Activated B cell treated with CpG ODN at 0.5 μM for 24 hours (primary cell): ENCODE measurements at regions of chr21 and their contacts with region 1.

Region 1: DNA sequence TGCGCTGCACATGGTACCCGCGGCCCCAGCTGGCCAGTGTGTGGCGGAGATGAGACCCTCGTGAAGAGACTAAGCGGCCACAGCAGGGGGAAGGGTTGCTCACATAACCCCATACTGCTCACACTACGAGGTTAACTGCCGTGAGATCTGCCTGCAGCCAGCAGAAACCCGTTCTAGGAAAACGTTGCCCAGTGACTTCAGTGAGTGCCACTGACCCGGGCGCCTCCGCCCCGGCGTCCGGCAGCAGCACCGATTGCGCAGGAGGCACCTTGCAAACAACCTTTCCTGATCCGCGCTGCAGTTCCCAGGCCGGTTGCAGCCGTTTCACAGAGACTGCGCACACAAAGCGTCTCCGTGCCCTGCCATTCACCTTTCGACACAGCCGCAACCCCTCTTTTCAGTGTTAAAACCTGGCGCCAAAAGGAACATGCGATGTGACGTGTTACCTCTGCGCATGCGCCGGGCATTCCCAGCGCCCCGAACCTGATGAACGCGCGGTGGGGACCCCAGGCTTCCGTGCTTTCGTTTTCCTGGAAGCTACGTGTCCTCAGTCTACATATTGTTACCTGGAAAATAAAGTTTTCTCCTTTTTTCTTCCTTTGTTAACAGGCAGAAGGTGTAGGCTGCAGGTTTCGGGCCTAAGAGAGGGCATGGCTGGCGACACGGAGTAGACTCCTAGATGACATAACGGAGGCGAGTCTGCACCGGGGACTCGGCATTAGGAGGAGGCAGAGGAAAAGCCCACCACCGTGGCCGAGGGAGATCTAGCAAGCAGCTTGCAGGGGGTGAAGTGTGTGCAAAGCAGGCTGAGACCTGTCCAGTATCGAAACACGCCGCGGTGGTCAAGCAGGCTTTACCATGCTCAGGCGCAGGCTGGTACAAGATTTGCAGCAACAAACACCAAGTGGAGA is 8.9 kb downstream of the VPS26C start:
- DNase-seq: peak; percentile 63
- ATAC-seq: peak; percentile 61
- H3K4me3 Mint-ChIP-seq: peak overlapping the region; percentile 87
- H3K27ac Mint-ChIP-seq: peak overlapping the region; percentile 81
- H3K4me1 Mint-ChIP-seq: peaks cover 26% of the 10 kb centered on the region
- H3K27me3 Mint-ChIP-seq: no peaks in the 10 kb centered on the region
- CTCF ChIP-seq: no peak

Region 2: GRCh38 chr21:37208056-37208721 is 50.0 kb before region 1 on chr21:
- CTCF ChIA-PET with region 1: no interaction called
- POLR2A ChIA-PET with region 1: no interaction called
- intact Hi-C with region 1: loop called (anchors 2 kb)
- DNase-seq: peak; percentile 47
- ATAC-seq: peak; percentile 65
- H3K4me3 Mint-ChIP-seq: peak overlapping the region; percentile 77
- H3K27ac Mint-ChIP-seq: peak overlapping the region; percentile 84
- H3K4me1 Mint-ChIP-seq: peaks cover 45% of the 10 kb centered on the region
- H3K27me3 Mint-ChIP-seq: no peaks in the 10 kb centered on the region
- CTCF ChIP-seq: no peak

Region 3: GRCh38 chr21:37220981-37221664 is 37.1 kb before region 1 on chr21:
- CTCF ChIA-PET with region 1: no interaction called
- POLR2A ChIA-PET with region 1: interaction called, 4 read pairs
- intact Hi-C with region 1: loop called (anchors 1 kb)
- DNase-seq: peak; percentile 90
- ATAC-seq: peak; percentile 87
- H3K4me3 Mint-ChIP-seq: peak overlapping the region; percentile 91
- H3K27ac Mint-ChIP-seq: peak overlapping the region; percentile 88
- H3K4me1 Mint-ChIP-seq: peaks cover 31% of the 10 kb centered on the region
- H3K27me3 Mint-ChIP-seq: no peaks in the 10 kb centered on the region
- CTCF ChIP-seq: no peak

Region 4: GRCh38 chr21:37322084-37322483 is 63.9 kb after region 1 on chr21:
- CTCF ChIA-PET with region 1: no interaction called
- POLR2A ChIA-PET with region 1: no interaction called
- intact Hi-C with region 1: no loop called
- DNase-seq: no peak
- ATAC-seq: no peak
- H3K4me3 Mint-ChIP-seq: no peak overlapping the region
- H3K27ac Mint-ChIP-seq: no peak overlapping the region
- H3K4me1 Mint-ChIP-seq: no peaks in the 10 kb centered on the region
- H3K27me3 Mint-ChIP-seq: peaks cover under 1% of the 10 kb centered on the region
- CTCF ChIP-seq: no peak